Gastrocnemius medialis (tissue), 4 donors: ENCODE measurements at regions of chr14 and their contacts with region 1.

Region 1: DNA sequence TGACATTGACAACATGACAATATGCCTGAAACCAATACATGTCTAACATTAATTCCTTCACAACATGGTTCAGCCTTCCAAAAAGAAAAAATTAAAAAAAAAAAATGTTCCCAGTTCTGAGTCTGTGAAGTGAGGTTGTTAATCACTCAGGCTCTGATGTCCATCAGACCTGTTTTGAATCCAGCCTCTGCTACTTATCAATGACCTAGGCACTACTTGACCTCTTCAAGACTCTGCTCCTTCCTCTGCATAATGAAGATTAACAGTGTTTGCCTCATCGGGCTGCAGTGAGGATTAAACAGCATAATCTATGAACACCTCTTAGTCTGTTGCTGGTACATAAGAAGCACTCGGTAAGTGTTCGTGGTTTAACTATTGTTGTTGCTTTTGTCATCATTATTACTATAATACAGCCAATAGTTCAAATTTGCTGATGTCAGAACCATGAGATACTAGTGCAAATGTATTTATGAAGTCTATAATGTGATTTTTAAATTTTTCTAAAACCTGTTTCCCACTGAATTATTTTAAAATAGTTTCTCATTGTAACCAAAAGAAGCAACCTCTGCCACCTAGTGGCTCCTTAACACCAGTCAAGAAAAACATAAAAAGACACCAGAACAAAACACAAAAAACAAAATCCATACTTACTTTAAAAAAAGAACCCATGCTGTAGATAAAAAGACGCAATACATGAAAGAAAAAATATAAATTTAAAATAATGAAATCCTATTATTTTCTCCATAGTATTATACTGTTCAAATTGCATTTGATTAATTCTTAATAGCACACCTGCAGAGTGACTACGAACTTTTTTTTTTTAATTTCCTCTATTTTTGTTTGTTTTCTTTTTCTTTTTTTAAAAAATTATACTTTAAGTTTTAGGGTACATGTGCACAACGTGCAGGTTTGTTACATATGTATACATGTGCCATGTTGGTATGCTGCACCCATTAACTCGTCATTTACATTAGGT is 20.3 kb upstream of the TMX1 start:
- DNase-seq: no peak
- ATAC-seq: no peak
- H3K4me3 ChIP-seq: no peak overlapping the region
- H3K27ac ChIP-seq: no peak overlapping the region
- H3K4me1 ChIP-seq: no peaks in the 10 kb centered on the region
- H3K27me3 ChIP-seq: no peaks in the 10 kb centered on the region
- CTCF ChIP-seq: peak; percentile 19 to 64 (median 55)
- POLR2A ChIP-seq: no peak

Region 2: DNA sequence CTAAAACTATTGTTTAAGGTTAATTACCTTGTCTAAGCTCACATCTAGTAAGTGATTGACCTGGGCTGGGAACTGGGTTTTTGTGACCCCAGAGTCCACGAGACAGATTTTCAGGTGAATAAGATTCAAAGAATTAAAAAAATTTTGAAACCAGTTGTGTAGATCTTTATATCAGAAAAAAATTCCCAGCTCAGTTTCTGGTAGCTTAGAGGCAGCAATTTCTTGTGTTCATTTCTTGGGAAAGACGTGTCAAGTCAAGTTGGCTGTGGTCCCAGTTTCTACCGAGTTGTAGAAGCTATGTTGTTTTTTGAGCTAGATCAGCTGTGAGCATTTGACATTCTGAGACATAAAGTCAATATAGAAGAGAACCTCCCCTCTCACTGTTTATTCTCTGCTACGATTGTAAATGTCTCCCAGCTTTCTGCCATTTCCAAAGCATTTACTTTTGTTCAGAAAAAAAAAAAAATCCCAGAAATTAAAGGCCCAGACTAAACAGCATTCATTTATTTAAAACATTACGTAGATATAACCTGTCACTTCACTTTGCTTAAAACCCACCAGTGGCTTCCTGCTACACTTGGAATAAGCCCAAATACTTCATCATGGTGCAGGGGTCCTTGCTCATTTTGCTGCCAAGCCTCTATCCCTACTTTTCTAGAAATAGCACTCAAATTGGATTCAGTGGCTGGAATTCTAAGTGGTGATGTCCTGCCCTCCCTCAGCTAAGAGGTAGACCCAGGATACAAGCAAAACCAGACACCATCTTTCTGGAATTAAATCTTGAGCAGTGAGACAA is 255.0 kb before region 1 on chr14:
- in situ Hi-C with region 1: loop called in 3 of 4 experiments (anchors 10 to 25 kb)
- intact Hi-C with region 1: no loop called
- DNase-seq: no peak
- ATAC-seq: no peak
- H3K4me3 ChIP-seq: no peak overlapping the region
- H3K27ac ChIP-seq: no peak overlapping the region
- H3K4me1 ChIP-seq: peaks cover 7 to 9% of the 10 kb centered on the region in 2 donors
- H3K27me3 ChIP-seq: no peaks in the 10 kb centered on the region
- CTCF ChIP-seq: no peak
- POLR2A ChIP-seq: no peak

Region 3: GRCh38 chr14:51066576-51066975 is 153.2 kb before region 1 on chr14:
- in situ Hi-C with region 1: no loop called
- intact Hi-C with region 1: no loop called
- DNase-seq: no peak
- ATAC-seq: no peak
- H3K4me3 ChIP-seq: no peak overlapping the region
- H3K27ac ChIP-seq: no peak overlapping the region
- H3K4me1 ChIP-seq: no peaks in the 10 kb centered on the region
- H3K27me3 ChIP-seq: no peaks in the 10 kb centered on the region
- CTCF ChIP-seq: no peak
- POLR2A ChIP-seq: no peak

Region 4: DNA sequence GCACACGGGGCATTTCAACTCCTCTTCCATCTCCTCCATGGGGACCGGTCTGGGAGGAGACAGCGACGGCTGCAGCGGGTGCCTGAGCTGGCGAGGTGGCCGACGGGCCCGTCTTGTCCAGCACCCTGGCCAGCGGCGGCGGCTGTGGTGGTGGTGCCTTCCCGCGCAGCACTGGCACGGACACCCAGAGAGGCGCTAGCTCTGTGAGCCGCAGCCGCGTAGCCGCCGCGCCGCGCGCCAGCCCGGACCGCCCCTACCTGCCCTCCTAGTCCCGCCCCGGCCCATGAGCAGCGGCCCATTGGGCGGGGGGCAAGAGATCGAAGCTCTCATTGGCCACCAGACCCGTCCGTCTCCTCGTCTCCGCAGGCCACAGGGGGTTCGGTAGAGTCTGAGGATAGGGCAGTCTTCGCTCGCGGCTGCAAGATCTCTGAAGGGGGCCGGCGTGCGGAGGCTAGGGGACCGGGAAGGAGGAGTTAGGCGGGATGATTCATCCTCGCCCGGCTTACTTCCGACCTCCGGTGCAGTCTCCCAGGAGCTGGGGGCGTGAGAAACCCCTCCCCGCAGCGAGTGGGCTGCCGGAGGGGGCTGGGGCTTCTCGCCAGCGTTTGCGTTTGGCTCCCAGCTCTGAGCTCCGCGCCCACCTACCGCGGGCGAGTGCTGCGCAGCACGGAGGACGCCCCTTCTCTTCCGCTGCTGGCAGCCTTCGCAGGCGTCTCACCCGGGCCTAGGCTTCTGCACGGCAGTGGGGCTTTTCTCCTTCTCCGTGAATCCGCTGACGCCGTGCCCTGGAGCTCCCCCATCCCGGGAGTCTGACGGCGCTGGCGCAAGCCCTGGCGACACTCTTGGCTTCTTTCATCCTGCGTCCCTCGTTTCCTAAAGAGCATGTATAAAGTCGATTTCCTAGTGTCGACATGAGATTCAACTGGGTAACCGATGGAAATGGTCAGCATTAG is 124.6 kb before region 1 on chr14 and contains the start of gene TRIM9:
- in situ Hi-C with region 1: no loop called
- intact Hi-C with region 1: loop called (anchors 10 kb)
- DNase-seq: peak; percentile 89 to 90
- ATAC-seq: peak; percentile 92 to 95
- H3K4me3 ChIP-seq: peak within 1 kb of the TSS; percentile 72 to 86 (median 80)
- H3K27ac ChIP-seq: peak within 1 kb of the TSS; percentile 58 to 67 (median 62)
- H3K4me1 ChIP-seq: peaks cover 14 to 28% of the 10 kb centered on the region in 2 donors
- H3K27me3 ChIP-seq: peaks cover 17 to 29% (median 25%) of the 10 kb centered on the region in 3 donors
- CTCF ChIP-seq: no peak
- POLR2A ChIP-seq: peak; percentile 18 to 46
- total RNA-seq, gene TRIM9: 0.26 to 3.0 (median 0.87) TPM

Region 5: DNA sequence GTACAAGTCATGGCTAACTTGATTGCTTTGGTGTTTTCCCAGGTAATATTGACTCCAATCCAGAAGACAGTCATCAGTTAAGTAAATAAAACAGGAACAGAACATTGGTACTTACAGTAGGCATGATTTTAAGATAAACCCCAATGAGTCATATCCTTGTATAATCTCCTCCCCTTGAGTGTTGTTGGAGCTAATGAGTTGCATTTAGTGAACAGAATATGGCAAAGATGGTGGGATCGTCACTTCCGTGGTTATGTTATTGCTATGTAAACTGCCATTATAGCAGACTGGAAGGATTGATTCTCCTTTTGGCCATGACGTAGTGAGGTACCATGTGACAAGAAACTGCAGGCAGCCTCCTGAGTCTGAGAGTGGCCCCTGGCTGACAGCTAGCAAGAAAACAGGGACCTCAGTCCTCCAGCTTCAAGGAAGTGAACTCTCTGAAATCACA is 122.5 kb after region 1 on chr14:
- in situ Hi-C with region 1: no loop called
- intact Hi-C with region 1: no loop called
- DNase-seq: no peak
- ATAC-seq: no peak
- H3K4me3 ChIP-seq: no peak overlapping the region
- H3K27ac ChIP-seq: no peak overlapping the region
- H3K4me1 ChIP-seq: no peaks in the 10 kb centered on the region
- H3K27me3 ChIP-seq: no peaks in the 10 kb centered on the region
- CTCF ChIP-seq: no peak
- POLR2A ChIP-seq: no peak